ENCODE measurements at regions of chr17 and their contacts with region 1.

Region 1: DNA sequence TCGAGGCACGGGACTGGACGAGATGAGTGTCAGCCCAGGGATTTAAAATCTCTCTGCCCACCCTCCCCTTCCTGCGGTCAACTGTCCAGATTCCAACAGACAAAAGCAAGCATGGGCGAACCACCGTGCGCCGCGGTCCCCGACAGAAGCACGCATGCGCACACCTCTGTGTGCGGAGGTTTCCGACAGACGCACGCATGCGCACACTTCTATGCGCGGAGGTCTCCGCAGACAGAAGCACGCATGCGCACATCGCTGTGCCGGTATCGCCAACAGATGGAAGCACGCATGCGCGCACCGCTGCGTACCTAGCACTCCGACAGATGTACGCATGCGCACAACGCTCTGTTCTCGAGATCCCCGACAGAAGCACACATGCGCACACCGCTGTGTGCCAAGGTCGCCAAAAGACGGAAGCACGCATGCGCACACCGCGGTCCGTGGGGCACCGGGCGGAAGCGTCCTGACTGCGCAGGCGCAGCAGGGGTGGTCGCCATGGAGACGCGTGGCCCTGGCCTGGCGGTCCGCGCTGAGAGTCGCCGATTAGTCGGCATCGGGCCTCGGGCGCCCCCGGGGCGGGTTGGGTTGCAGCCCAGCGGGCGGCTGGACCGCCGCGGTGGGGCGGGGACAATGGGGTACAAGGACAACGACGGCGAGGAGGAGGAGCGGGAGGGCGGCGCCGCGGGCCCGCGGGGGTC is 57.4 kb upstream of the RPH3AL start:
- DNase-seq: peak; percentile 100
- H3K4me3 Mint-ChIP-seq: peak overlapping the region; percentile 80
- H3K27ac Mint-ChIP-seq: peak overlapping the region; percentile 91
- H3K4me1 Mint-ChIP-seq: peaks cover 62% of the 10 kb centered on the region
- H3K27me3 Mint-ChIP-seq: peaks cover 5% of the 10 kb centered on the region

Region 2: GRCh38 chr17:233473-233941 is 176.5 kb before region 1 on chr17:
- CTCF ChIA-PET with region 1: no interaction called
- DNase-seq: no peak
- H3K4me3 Mint-ChIP-seq: no peak overlapping the region
- H3K27ac Mint-ChIP-seq: no peak overlapping the region
- H3K4me1 Mint-ChIP-seq: no peaks in the 10 kb centered on the region
- H3K27me3 Mint-ChIP-seq: no peaks in the 10 kb centered on the region

Region 3: DNA sequence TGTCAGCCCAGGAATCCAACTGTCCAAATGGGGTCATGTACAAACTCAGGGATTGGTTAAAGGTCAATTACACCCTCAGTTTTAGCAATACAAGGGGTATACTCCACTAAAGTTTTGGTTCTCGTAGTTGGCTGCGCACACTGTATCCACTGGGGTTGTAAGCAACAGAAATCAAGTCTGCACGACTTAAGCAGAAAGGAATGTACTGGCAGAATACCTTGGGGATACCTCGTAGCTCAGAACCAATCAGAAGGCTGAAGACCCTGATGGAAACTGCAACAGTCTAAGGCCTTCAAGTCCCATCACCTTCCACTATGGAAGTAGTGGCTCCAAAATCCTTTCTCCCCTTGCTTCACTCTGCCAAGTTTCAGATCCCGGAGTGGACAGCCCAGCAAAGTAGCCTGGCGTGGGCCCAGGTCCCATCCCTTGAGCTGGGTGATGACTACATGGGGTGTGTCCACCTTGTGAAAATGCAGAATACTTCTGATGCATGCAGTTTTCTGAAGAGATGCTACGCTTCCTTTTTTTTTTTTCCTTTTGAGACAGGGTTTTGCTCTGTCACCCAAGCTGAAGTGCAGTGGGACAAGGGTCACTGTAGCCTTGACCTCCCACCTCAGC is 36.3 kb before region 1 on chr17:
- CTCF ChIA-PET with region 1: no interaction called
- DNase-seq: no peak
- H3K4me3 Mint-ChIP-seq: no peak overlapping the region
- H3K27ac Mint-ChIP-seq: no peak overlapping the region
- H3K4me1 Mint-ChIP-seq: no peaks in the 10 kb centered on the region
- H3K27me3 Mint-ChIP-seq: peaks cover 5% of the 10 kb centered on the region

Region 4: GRCh38 chr17:396788-397187 is 13.2 kb before region 1 on chr17:
- CTCF ChIA-PET with region 1: interaction called, 10 read pairs
- DNase-seq: no peak
- H3K4me3 Mint-ChIP-seq: no peak overlapping the region
- H3K27ac Mint-ChIP-seq: no peak overlapping the region
- H3K4me1 Mint-ChIP-seq: peaks cover 6% of the 10 kb centered on the region
- H3K27me3 Mint-ChIP-seq: no peaks in the 10 kb centered on the region

Region 5: GRCh38 chr17:688100-688989 is 278.3 kb after region 1 on chr17:
- CTCF ChIA-PET with region 1: interaction called, 52 read pairs
- DNase-seq: peak; percentile 36
- H3K4me3 Mint-ChIP-seq: no peak overlapping the region
- H3K27ac Mint-ChIP-seq: no peak overlapping the region
- H3K4me1 Mint-ChIP-seq: peaks cover 4% of the 10 kb centered on the region
- H3K27me3 Mint-ChIP-seq: no peaks in the 10 kb centered on the region

Region 6: DNA sequence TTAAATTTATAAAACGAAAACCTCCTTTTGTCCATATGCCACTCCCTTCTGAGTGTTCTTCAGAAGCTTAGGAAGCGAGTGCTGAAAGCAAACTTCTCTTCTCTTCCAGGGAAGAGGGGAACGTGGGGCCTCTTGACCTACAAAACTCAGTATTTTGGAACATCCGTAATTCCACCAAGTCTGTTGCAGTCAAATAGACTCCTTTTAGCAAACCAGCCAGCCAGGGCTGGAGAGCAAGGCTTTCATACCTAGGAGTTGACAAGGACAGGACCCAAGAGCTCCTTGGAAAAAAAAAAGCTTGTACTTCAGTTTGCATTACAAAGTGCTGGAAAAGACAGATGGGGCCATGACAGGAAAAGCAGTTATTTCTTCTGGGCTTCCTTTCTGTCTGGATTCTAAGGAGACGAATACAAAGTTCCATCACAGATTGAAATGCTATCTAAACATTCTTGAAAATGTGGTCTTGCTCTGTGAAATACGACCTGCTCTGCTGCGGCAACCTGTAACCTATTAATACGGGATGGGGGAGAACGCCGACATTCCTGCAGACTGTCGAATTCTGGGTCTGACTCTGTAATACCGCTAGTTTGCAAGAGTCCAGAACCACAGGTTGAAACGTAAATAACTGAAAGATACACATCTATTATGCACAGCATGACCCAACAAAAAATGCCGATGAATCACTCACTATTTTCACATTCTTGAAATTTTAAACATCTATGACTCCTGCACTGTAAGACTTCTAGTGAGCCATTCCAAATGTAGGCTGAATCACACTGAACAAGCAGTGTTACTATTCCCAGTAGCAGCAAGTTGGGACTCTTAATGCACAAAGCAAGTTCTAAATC is 284.0 kb after region 1 on chr17:
- CTCF ChIA-PET with region 1: interaction called, 99 read pairs
- DNase-seq: no peak
- H3K4me3 Mint-ChIP-seq: no peak overlapping the region
- H3K27ac Mint-ChIP-seq: no peak overlapping the region
- H3K4me1 Mint-ChIP-seq: no peaks in the 10 kb centered on the region
- H3K27me3 Mint-ChIP-seq: no peaks in the 10 kb centered on the region

Region 7: GRCh38 chr17:700504-701094 is 290.6 kb after region 1 on chr17:
- CTCF ChIA-PET with region 1: interaction called, 99 read pairs
- DNase-seq: no peak
- H3K4me3 Mint-ChIP-seq: no peak overlapping the region
- H3K27ac Mint-ChIP-seq: no peak overlapping the region
- H3K4me1 Mint-ChIP-seq: no peaks in the 10 kb centered on the region
- H3K27me3 Mint-ChIP-seq: no peaks in the 10 kb centered on the region